ENCODE measurements at regions of chr5 and their contacts with region 1.

Region 1: GRCh38 chr5:69113851-69114250 is 20.0 kb downstream of the SLC30A5 start:
- DNase-seq: no peak
- ATAC-seq: no peak
- H3K4me3 ChIP-seq: no peak overlapping the region
- H3K27ac ChIP-seq: no peak overlapping the region
- H3K4me1 ChIP-seq: no peaks in the 10 kb centered on the region
- H3K27me3 ChIP-seq: no peaks in the 10 kb centered on the region

Region 2: DNA sequence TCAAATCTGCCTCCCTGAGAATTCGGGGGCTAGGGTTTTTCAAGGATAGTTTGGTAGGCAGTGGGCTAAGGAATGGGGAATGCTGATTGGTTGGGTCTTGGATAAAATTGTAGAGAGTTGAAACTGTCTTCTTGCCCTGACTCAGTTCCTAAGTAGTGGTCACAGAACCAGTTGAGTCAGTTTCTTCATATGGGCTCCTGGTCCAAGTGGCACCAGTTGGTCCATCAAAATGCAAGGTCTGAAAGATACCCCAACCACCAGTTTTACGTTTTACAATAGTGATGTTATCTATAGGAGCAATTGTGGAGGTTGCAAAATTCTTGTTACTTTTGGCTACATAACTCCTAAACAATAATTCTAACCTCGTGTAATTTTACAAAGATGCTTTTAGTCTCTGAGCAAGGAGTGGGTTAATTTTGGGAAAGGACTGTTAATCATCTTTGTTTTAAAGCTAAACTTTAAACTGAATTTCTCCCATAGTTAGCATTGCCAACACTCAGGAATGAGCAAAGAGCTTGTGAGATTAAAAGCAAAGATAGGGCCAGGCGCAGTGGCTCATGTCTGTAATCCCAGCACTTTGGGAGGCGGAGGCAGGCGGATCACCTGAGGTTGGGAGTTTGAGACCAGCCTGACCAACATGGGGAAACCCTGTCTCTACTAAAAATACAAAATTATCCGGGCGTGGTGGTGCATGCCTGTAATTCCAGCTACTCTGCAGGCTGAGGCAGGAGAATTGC is 128.5 kb after region 1 on chr5:
- intact Hi-C with region 1: loop called in 1 of 4 experiments (anchors 10 kb)
- DNase-seq: no peak
- ATAC-seq: no peak
- H3K4me3 ChIP-seq: no peak overlapping the region
- H3K27ac ChIP-seq: no peak overlapping the region
- H3K4me1 ChIP-seq: no peaks in the 10 kb centered on the region
- H3K27me3 ChIP-seq: no peaks in the 10 kb centered on the region

Region 3: GRCh38 chr5:69334793-69335268 is 221.0 kb after region 1 on chr5:
- intact Hi-C with region 1: no loop called
- DNase-seq: peak; percentile 88 to 96 (median 94)
- ATAC-seq: peak; percentile 90
- H3K4me3 ChIP-seq: peak overlapping the region; percentile 16
- H3K27ac ChIP-seq: no peak overlapping the region
- H3K4me1 ChIP-seq: no peaks in the 10 kb centered on the region
- H3K27me3 ChIP-seq: no peaks in the 10 kb centered on the region

Region 4: GRCh38 chr5:69432412-69433206 is 318.8 kb after region 1 on chr5:
- intact Hi-C with region 1: no loop called
- DNase-seq: no peak
- ATAC-seq: no peak
- H3K4me3 ChIP-seq: no peak overlapping the region
- H3K27ac ChIP-seq: no peak overlapping the region
- H3K4me1 ChIP-seq: no peaks in the 10 kb centered on the region
- H3K27me3 ChIP-seq: no peaks in the 10 kb centered on the region